Natural killer cell (primary cell): ENCODE measurements at regions of chr13 and their contacts with region 1.

Region 1: DNA sequence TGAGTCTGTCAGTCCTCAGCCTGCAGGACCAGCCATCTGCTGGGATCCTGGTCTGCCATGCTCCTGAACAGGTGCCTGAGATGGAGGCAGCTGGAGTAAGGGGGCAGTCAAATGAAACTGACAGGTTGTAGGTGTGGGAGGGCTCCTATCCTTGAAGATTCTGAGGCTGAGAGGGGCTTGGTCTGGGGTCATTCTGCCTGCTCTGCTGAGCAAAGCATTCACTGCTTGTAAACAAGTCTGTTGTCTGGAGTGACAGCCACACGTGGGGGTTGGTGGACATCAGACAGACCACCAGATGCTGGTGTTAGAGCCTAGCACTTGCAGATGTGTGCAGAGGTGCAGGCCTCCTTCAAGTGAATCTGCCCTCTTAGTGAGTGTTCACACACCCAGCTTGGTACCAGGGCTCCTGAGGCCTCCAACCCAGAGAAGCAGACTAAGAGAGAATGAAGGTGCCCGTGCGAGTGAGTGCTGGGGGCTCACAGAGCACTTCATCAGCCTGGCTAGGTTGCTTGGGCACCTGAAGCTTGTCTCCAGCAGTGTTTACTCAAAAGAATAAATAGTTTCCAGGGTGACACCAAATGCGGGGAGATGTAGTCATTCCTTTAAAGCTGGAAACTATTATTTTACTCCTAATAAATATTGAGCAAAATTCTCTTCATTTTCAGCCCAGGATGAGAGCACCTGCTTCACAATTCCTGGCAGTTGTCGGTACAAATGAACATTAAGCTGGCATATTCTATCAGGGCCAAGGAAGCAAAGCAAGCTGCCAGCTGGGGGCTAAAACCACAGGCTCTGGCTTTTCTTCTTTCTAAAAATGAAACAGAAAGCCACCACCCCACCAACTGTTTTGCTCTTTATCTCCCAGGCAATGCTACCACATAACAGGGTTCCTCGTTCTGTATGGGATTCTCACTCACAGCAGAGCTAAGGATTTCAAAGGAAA is 82.3 kb downstream of the RNASEH2B start:
- DNase-seq: peak in 1 of 2 donors; percentile 31
- ATAC-seq: peak; percentile 58 to 78 (median 67)
- H3K4me3 ChIP-seq: no peak overlapping the region
- H3K4me3 Mint-ChIP-seq: peak overlapping the region; percentile 68
- H3K27ac ChIP-seq: peak overlapping the region; percentile 32
- H3K27ac Mint-ChIP-seq: peak overlapping the region; percentile 73 to 74
- H3K4me1 ChIP-seq: peaks cover 17% of the 10 kb centered on the region
- H3K4me1 Mint-ChIP-seq: peaks cover 21 to 25% of the 10 kb centered on the region in 2 donors
- H3K27me3 ChIP-seq: no peaks in the 10 kb centered on the region
- H3K27me3 Mint-ChIP-seq: no peaks in the 10 kb centered on the region
- CTCF ChIP-seq: no peak

Region 2: DNA sequence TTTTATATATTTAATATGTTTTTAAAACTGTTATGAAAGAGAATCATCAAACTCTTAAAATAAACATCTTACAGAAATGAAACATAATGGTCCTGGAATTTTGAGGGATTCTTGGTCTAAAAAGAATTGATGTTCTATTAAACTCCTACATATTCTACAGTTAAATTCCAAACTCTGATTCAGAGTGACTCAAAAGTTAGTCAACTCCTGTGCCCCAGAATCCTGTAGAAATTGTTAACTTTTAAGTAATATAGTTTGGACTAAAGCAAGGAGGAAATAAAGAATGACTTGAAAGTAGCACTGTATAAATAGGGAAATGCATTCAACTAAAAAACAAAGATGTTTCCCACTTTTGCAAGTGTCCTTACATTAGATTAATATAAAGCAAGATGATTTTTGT is 1968.4 kb before region 1 on chr13:
- intact Hi-C with region 1: no loop called
- DNase-seq: no peak
- ATAC-seq: no peak
- H3K4me3 ChIP-seq: no peak overlapping the region
- H3K4me3 Mint-ChIP-seq: no peak overlapping the region
- H3K27ac ChIP-seq: no peak overlapping the region
- H3K27ac Mint-ChIP-seq: no peak overlapping the region
- H3K4me1 ChIP-seq: no peaks in the 10 kb centered on the region
- H3K4me1 Mint-ChIP-seq: peaks cover 12 to 14% of the 10 kb centered on the region in 2 donors
- H3K27me3 ChIP-seq: no peaks in the 10 kb centered on the region
- H3K27me3 Mint-ChIP-seq: no peaks in the 10 kb centered on the region
- CTCF ChIP-seq: no peak

Region 3: DNA sequence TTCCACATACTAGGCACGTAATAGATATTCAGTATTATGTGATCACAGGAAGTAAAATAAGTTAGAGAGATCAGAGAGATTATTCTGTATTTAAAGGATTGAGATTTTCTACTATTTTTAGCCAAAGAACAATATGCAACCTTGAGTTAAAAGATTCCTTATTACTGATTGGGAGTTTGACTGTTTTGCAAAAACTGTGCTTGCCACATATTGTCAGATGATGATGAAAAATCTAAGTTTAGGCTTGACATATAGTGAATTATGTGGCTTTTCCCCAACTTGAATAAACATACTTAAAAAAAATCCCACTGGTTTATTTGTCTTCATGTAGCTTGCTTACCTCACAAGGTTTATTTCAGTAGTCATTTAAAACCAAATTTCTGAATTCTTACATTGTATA is 782.2 kb before region 1 on chr13:
- intact Hi-C with region 1: loop called (anchors 5 kb)
- DNase-seq: no peak
- ATAC-seq: no peak
- H3K4me3 ChIP-seq: no peak overlapping the region
- H3K4me3 Mint-ChIP-seq: no peak overlapping the region
- H3K27ac ChIP-seq: no peak overlapping the region
- H3K27ac Mint-ChIP-seq: no peak overlapping the region
- H3K4me1 ChIP-seq: no peaks in the 10 kb centered on the region
- H3K4me1 Mint-ChIP-seq: peaks cover 5 to 8% of the 10 kb centered on the region in 2 donors
- H3K27me3 ChIP-seq: no peaks in the 10 kb centered on the region
- H3K27me3 Mint-ChIP-seq: peaks cover 0 to 5% of the 10 kb centered on the region in 2 donors
- CTCF ChIP-seq: no peak

Region 4: GRCh38 chr13:50951366-50951765 is 40.5 kb before region 1 on chr13:
- intact Hi-C with region 1: no loop called
- DNase-seq: no peak
- ATAC-seq: no peak
- H3K4me3 ChIP-seq: no peak overlapping the region
- H3K4me3 Mint-ChIP-seq: no peak overlapping the region
- H3K27ac ChIP-seq: no peak overlapping the region
- H3K27ac Mint-ChIP-seq: no peak overlapping the region
- H3K4me1 ChIP-seq: no peaks in the 10 kb centered on the region
- H3K4me1 Mint-ChIP-seq: no peaks in the 10 kb centered on the region
- H3K27me3 ChIP-seq: no peaks in the 10 kb centered on the region
- H3K27me3 Mint-ChIP-seq: no peaks in the 10 kb centered on the region
- CTCF ChIP-seq: no peak